ENCODE measurements at regions of chr11 and their contacts with region 1.

Region 1: GRCh38 chr11:65512306-65512705 is 12.6 kb upstream of the SCYL1 start:
- DNase-seq: no peak
- ATAC-seq: no peak
- H3K4me3 ChIP-seq: no peak overlapping the region
- H3K27ac ChIP-seq: no peak overlapping the region
- H3K4me1 ChIP-seq: no peaks in the 10 kb centered on the region
- H3K27me3 ChIP-seq: no peaks in the 10 kb centered on the region
- CTCF ChIP-seq: no peak
- POLR2A ChIP-seq: no peak
- RAD21 ChIP-seq: no peak

Region 2: DNA sequence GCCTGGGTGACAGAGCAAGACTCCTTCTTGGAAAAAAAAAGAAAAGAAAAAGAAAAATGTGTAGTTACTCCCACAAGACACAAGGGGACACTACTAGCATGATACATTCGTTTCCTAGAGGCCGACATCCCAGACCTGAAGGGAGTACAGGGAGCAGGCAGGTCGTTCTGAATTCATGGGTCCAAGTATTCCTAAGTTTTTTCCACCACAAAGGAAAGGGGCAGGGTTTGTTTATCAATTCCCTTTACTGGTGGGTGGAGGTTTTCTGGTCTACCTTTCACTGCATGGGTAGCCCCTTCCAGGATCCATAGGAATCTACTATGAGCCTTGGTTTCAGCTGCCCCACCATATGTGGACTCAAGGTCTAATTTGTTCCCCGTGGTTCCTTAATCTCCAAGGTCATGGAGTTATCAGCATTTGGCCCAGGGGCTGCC is 145.9 kb before region 1 on chr11:
- CTCF ChIA-PET with region 1: interaction called, 5 read pairs
- POLR2A ChIA-PET with region 1: interaction called, 5 read pairs
- dilution Hi-C with region 1: no loop called
- in situ Hi-C with region 1: loop called (anchors 5 kb)
- intact Hi-C with region 1: loop called (anchors 1 kb)
- DNase-seq: peak; percentile 86
- ATAC-seq: peak; percentile 94
- H3K4me3 ChIP-seq: no peak overlapping the region
- H3K27ac ChIP-seq: no peak overlapping the region
- H3K4me1 ChIP-seq: peaks cover 2% of the 10 kb centered on the region
- H3K27me3 ChIP-seq: no peaks in the 10 kb centered on the region
- CTCF ChIP-seq: peak; percentile 85
- POLR2A ChIP-seq: peak; percentile 38; the same call in 1 of the 2 replicates
- RAD21 ChIP-seq: peak; percentile 88

Region 3: GRCh38 chr11:65429724-65430405 is 82.4 kb before region 1 on chr11:
- CTCF ChIA-PET with region 1: no interaction called
- POLR2A ChIA-PET with region 1: interaction called, 78 read pairs
- dilution Hi-C with region 1: no loop called
- in situ Hi-C with region 1: no loop called
- intact Hi-C with region 1: loop called (anchors 5 kb)
- DNase-seq: peak; percentile 80
- ATAC-seq: peak; percentile 1
- H3K4me3 ChIP-seq: peak overlapping the region; percentile 35
- H3K27ac ChIP-seq: peak overlapping the region; percentile 12
- H3K4me1 ChIP-seq: peaks cover 2% of the 10 kb centered on the region; the same call in 1 of the 2 replicates
- H3K27me3 ChIP-seq: no peaks in the 10 kb centered on the region
- CTCF ChIP-seq: no peak
- POLR2A ChIP-seq: peak; percentile 80
- RAD21 ChIP-seq: no peak

Region 4: GRCh38 chr11:65802841-65803240 is 290.5 kb after region 1 on chr11:
- CTCF ChIA-PET with region 1: no interaction called
- POLR2A ChIA-PET with region 1: no interaction called
- dilution Hi-C with region 1: no loop called
- in situ Hi-C with region 1: no loop called
- intact Hi-C with region 1: no loop called
- DNase-seq: no peak
- ATAC-seq: no peak
- H3K4me3 ChIP-seq: no peak overlapping the region
- H3K27ac ChIP-seq: no peak overlapping the region
- H3K4me1 ChIP-seq: no peaks in the 10 kb centered on the region
- H3K27me3 ChIP-seq: peaks cover 49% of the 10 kb centered on the region
- CTCF ChIP-seq: no peak
- POLR2A ChIP-seq: no peak
- RAD21 ChIP-seq: no peak